ENCODE measurements at regions of chr5 and their contacts with region 1.

Region 1: DNA sequence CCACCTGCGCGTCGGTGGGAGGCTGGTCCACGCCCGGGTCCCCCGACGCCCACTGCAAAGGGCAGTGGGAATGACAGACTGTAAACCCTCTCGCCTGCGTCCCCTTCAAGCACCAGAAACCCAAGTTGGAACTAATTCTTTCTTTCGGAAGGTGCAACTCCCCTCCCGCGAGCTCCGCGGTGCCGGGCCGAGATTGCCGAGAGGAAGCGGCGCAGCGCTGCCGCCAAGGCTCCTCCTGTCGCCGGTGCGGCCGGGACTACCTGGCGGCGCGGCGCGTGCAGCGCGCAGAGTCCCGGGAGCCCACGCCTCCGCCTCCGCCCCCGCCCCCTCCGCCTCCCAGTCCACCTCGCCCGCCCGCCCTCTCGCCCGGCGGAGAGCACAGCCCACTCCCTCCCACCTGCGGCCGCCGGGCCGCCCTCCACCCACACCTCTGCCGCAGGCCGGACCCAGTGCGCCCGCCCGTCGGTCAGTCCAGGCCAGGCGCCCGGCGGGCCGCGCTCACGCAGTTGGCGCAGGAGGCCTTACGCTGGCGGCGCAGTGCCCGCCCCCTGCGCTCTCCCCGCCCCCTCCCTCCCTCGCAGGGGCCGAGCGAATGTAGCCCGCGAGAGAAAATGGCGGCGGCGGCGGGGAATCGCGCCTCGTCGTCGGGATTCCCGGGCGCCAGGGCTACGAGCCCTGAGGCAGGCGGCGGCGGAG is at the start of gene MAP3K1:
- DNase-seq: no peak
- ATAC-seq: peak; percentile 63
- H3K4me3 ChIP-seq: peak within 1 kb of the TSS; percentile 97
- H3K27ac ChIP-seq: peak within 1 kb of the TSS; percentile 78
- H3K4me1 ChIP-seq: peaks cover 23% of the 10 kb centered on the region
- H3K27me3 ChIP-seq: no peaks in the 10 kb centered on the region
- CTCF ChIP-seq: peak in 1 of 3 experiments; percentile 22; a peak in 2 of 6 replicates
- EP300 ChIP-seq: no peak
- POLR2A ChIP-seq: peak; percentile 63
- RAD21 ChIP-seq: no peak
- polyA plus RNA-seq, gene MAP3K1: 7.5 to 12.1 TPM

Region 2: DNA sequence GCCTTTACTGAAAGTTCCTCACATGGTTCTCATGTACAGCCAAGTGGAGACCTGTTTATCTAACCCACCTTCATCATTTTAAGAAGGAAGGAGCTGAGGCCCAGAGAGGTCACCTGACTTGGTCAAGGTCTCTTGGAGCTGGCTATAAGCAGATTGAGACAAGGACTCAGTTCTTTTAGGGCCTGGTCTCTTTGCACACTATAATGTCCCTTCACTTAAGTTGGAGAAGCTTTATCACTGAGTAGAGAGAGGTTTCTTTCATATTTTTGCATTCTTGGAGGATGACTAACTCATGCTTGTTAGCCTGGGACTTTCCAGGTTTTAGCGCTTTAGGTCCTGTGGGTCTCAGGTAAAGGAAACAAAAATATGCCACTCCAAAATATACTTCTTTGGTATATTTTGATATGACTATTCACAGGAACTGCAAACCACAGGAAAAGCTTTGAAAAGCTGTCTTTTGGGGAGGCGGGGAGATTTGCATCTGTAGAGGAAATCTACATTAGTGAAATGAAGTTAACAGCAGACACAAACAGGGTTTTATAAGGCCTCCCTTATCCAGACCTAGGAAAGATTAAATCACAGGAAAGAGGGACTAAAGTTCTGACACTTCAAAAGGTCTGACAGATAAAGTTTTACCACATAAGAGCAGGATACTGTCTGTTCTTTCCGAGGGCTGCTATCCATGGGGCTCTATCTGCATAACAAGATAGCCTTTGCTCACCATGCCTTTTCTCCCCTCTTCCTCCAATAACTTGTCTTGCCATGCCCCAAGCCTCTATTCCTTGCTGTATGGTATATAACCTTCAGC is 486.2 kb before region 1 on chr5:
- CTCF ChIA-PET with region 1: no interaction called
- POLR2A ChIA-PET with region 1: no interaction called
- RAD21 ChIA-PET with region 1: interaction called, 3 read pairs
- SMC1A ChIA-PET with region 1: interaction called, 6 read pairs
- in situ Hi-C with region 1: no loop called
- intact Hi-C with region 1: loop called (anchors 2 kb)
- DNase-seq: peak; percentile 78
- ATAC-seq: peak; percentile 82
- H3K4me3 ChIP-seq: peak overlapping the region; percentile 14; the same call in 1 of the 2 replicates
- H3K27ac ChIP-seq: peak overlapping the region; percentile 59
- H3K4me1 ChIP-seq: peaks cover 21% of the 10 kb centered on the region
- H3K27me3 ChIP-seq: no peaks in the 10 kb centered on the region
- CTCF ChIP-seq: no peak
- EP300 ChIP-seq: peak in 1 of 2 experiments; percentile 70; a peak in 1 of 4 replicates
- POLR2A ChIP-seq: no peak
- RAD21 ChIP-seq: no peak

Region 3: DNA sequence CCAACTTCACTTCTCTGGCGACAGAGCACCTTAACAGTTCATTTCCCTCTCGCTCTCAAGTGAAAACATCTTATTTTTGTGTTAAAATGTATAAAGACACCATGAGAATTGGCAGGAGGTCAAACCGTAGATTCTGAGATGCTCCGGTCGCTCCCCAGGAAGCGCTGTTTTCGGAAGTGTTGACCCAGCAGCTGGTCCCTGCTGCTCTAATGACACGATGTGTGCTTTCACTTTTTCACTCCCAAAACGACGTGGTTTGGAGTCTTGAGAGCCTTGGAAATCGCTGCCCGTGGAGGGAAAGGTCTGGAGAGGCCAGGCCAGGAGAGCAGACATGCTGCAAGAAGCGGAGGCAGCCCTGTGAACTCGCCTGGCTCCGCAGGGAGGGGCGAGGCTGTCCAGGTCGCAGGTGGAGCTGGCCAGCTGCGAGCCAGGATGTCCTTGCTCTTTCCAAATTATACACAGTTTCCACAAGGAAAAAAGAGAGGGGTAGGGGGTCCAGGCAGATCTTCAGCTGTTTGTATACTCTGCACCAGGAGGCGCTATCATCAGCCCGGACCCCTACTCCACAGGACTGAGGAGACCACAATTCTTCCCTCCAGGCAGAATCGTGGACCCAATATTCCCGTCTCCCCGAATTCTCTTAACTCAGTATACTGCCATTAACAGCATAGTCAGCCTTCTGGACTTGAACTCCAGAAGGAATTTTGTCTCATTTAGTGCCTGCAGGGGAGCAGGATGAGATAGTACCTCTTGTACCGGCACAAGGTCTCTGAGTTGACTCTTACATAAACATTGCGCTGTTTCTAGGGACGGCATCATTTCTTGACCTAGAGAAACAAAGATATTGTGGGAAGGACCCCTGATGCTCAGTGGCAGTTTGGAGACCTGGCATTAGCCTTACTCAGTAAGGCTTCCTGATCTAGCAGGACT is 333.4 kb before region 1 on chr5:
- CTCF ChIA-PET with region 1: no interaction called
- POLR2A ChIA-PET with region 1: no interaction called
- RAD21 ChIA-PET with region 1: interaction called, 5 read pairs
- SMC1A ChIA-PET with region 1: interaction called, 6 read pairs
- in situ Hi-C with region 1: no loop called
- intact Hi-C with region 1: loop called (anchors 1 kb)
- DNase-seq: peak; percentile 23
- ATAC-seq: peak; percentile 58
- H3K4me3 ChIP-seq: peak overlapping the region; percentile 87
- H3K27ac ChIP-seq: peak overlapping the region; percentile 4; the same call in 1 of the 2 replicates
- H3K4me1 ChIP-seq: peaks cover 24% of the 10 kb centered on the region
- H3K27me3 ChIP-seq: no peaks in the 10 kb centered on the region
- CTCF ChIP-seq: peak; percentile 15 to 31 (median 26); a peak in 2 of 6 replicates
- EP300 ChIP-seq: no peak
- POLR2A ChIP-seq: no peak
- RAD21 ChIP-seq: peak; percentile 32; the same call in 1 of the 2 replicates

Region 4: DNA sequence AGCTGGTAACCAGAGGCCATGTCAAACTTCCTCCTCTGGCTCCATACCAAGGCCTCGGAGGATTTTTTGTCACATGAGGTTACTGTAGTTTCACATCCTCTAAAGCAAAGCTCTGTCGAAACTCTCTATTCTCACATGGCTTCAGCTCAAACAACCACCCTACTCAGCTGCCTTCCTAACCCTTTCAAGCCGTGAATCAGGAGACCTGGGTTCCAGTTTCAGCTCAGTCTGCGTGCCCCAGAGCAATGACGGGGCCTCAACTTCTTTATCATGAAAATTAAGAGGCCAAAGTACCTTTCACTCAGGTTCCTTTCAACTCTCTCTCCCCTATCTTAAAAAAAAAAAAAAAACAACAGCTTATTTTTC is 145.0 kb before region 1 on chr5:
- CTCF ChIA-PET with region 1: no interaction called
- POLR2A ChIA-PET with region 1: interaction called, 3 read pairs
- RAD21 ChIA-PET with region 1: interaction called, 10 read pairs
- SMC1A ChIA-PET with region 1: interaction called, 16 read pairs
- in situ Hi-C with region 1: no loop called
- intact Hi-C with region 1: loop called (anchors 5 kb)
- DNase-seq: peak; percentile 98
- ATAC-seq: peak; percentile 97
- H3K4me3 ChIP-seq: no peak overlapping the region
- H3K27ac ChIP-seq: no peak overlapping the region
- H3K4me1 ChIP-seq: peaks cover 22% of the 10 kb centered on the region
- H3K27me3 ChIP-seq: no peaks in the 10 kb centered on the region
- CTCF ChIP-seq: no peak
- EP300 ChIP-seq: peak; percentile 92 to 96
- POLR2A ChIP-seq: no peak
- RAD21 ChIP-seq: no peak; the same call in 1 of the 2 replicates

Region 5: GRCh38 chr5:56725711-56726411 is 89.2 kb before region 1 on chr5:
- CTCF ChIA-PET with region 1: no interaction called
- POLR2A ChIA-PET with region 1: interaction called, 4 read pairs
- RAD21 ChIA-PET with region 1: no interaction called
- SMC1A ChIA-PET with region 1: no interaction called
- in situ Hi-C with region 1: no loop called
- intact Hi-C with region 1: loop called (anchors 5 kb)
- DNase-seq: no peak
- ATAC-seq: peak; percentile 71
- H3K4me3 ChIP-seq: no peak overlapping the region
- H3K27ac ChIP-seq: no peak overlapping the region
- H3K4me1 ChIP-seq: peaks cover 7% of the 10 kb centered on the region; the same call in 1 of the 2 replicates
- H3K27me3 ChIP-seq: peaks cover 0 to 3% of the 10 kb centered on the region in 2 experiments; a peak in 1 of 4 replicates
- CTCF ChIP-seq: no peak
- EP300 ChIP-seq: no peak
- POLR2A ChIP-seq: no peak
- RAD21 ChIP-seq: no peak

Region 6: GRCh38 chr5:56833325-56833724 is 18.2 kb after region 1 on chr5:
- CTCF ChIA-PET with region 1: interaction called, 38 read pairs
- POLR2A ChIA-PET with region 1: interaction called, 5 read pairs
- RAD21 ChIA-PET with region 1: interaction called, 21 read pairs
- SMC1A ChIA-PET with region 1: interaction called, 64 read pairs
- in situ Hi-C with region 1: no loop called
- intact Hi-C with region 1: no loop called
- DNase-seq: no peak
- ATAC-seq: no peak
- H3K4me3 ChIP-seq: no peak overlapping the region
- H3K27ac ChIP-seq: no peak overlapping the region
- H3K4me1 ChIP-seq: peaks cover 7% of the 10 kb centered on the region
- H3K27me3 ChIP-seq: no peaks in the 10 kb centered on the region
- CTCF ChIP-seq: no peak
- EP300 ChIP-seq: no peak
- POLR2A ChIP-seq: no peak
- RAD21 ChIP-seq: no peak

Measured in GM12878 (cell line).